Ascending aorta (tissue), 2 donors: ENCODE measurements at regions of chr7 and their contacts with region 1.

Region 1: GRCh38 chr7:94276795-94277194 is 117.9 kb upstream of the COL1A2 start:
- DNase-seq: no peak
- H3K4me3 ChIP-seq: no peak overlapping the region
- H3K27ac ChIP-seq: no peak overlapping the region
- H3K4me1 ChIP-seq: no peaks in the 10 kb centered on the region
- H3K27me3 ChIP-seq: no peaks in the 10 kb centered on the region
- CTCF ChIP-seq: peak in 2 of 3 experiments; percentile 12 to 42

Region 2: GRCh38 chr7:93715234-93715633 is 561.6 kb before region 1 on chr7:
- intact Hi-C with region 1: loop called (anchors 5 kb)
- DNase-seq: no peak
- H3K4me3 ChIP-seq: no peak overlapping the region
- H3K27ac ChIP-seq: no peak overlapping the region
- H3K4me1 ChIP-seq: no peaks in the 10 kb centered on the region
- H3K27me3 ChIP-seq: no peaks in the 10 kb centered on the region
- CTCF ChIP-seq: peak in 1 of 3 experiments; percentile 42